CD8-positive, alpha-beta T cell (primary cell): ENCODE measurements at regions of chr12 and their contacts with region 1.

Region 1: GRCh38 chr12:116236148-116236731 is 41.3 kb downstream of the MED13L start:
- DNase-seq: peak in 8 of 9 experiments; percentile 26 to 78 (median 54)
- ATAC-seq: peak; percentile 73
- H3K4me3 ChIP-seq: no peak overlapping the region
- H3K4me3 Mint-ChIP-seq: peak overlapping the region; percentile 1
- H3K27ac ChIP-seq: peak overlapping the region in 1 of 2 experiments; percentile 18
- H3K27ac Mint-ChIP-seq: peak overlapping the region; percentile 83
- H3K4me1 ChIP-seq: peaks cover 10% of the 10 kb centered on the region
- H3K4me1 Mint-ChIP-seq: peaks cover 46% of the 10 kb centered on the region
- H3K27me3 ChIP-seq: no peaks in the 10 kb centered on the region
- H3K27me3 Mint-ChIP-seq: no peaks in the 10 kb centered on the region
- CTCF ChIP-seq: peak; percentile 52

Region 2: DNA sequence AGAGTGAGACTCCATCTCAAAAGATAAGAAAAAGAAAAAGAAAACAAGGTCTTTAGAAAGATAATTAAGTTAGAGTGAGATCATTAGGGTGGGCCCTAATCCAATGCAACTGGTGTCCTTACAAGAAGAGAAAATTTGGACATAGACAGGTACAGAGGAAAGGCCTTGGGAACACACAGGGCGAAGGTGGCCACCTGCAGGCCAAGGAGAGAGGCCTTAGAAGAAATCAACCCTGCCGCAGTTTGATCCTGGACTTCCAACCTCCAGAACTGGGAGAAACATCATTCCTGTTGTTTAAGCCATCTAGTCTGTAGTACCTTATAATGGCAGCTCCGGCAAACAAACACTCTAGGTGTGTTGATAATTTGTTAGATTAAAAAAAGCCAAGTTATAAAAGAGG is 450.7 kb before region 1 on chr12:
- CTCF ChIA-PET with region 1: no interaction called
- POLR2A ChIA-PET with region 1: no interaction called
- intact Hi-C with region 1: no loop called
- DNase-seq: no peak
- ATAC-seq: no peak
- H3K4me3 ChIP-seq: no peak overlapping the region
- H3K4me3 Mint-ChIP-seq: no peak overlapping the region
- H3K27ac ChIP-seq: no peak overlapping the region
- H3K27ac Mint-ChIP-seq: no peak overlapping the region
- H3K4me1 ChIP-seq: no peaks in the 10 kb centered on the region
- H3K4me1 Mint-ChIP-seq: no peaks in the 10 kb centered on the region
- H3K27me3 ChIP-seq: no peaks in the 10 kb centered on the region
- H3K27me3 Mint-ChIP-seq: peaks cover 2% of the 10 kb centered on the region
- CTCF ChIP-seq: no peak

Region 3: GRCh38 chr12:115998119-115998633 is 238.1 kb before region 1 on chr12:
- CTCF ChIA-PET with region 1: interaction called, 8 read pairs
- POLR2A ChIA-PET with region 1: no interaction called
- intact Hi-C with region 1: loop called (anchors 1 to 5 kb)
- DNase-seq: peak in 3 of 9 experiments; percentile 20 to 63 (median 55)
- ATAC-seq: peak; percentile 58
- H3K4me3 ChIP-seq: no peak overlapping the region
- H3K4me3 Mint-ChIP-seq: no peak overlapping the region
- H3K27ac ChIP-seq: no peak overlapping the region
- H3K27ac Mint-ChIP-seq: peak overlapping the region; percentile 75
- H3K4me1 ChIP-seq: no peaks in the 10 kb centered on the region
- H3K4me1 Mint-ChIP-seq: peaks cover 14% of the 10 kb centered on the region
- H3K27me3 ChIP-seq: no peaks in the 10 kb centered on the region
- H3K27me3 Mint-ChIP-seq: no peaks in the 10 kb centered on the region
- CTCF ChIP-seq: peak; percentile 97

Region 4: GRCh38 chr12:116015525-116015924 is 220.7 kb before region 1 on chr12:
- CTCF ChIA-PET with region 1: no interaction called
- POLR2A ChIA-PET with region 1: no interaction called
- intact Hi-C with region 1: loop called (anchors 5 kb)
- DNase-seq: peak in 2 of 9 experiments; percentile 7 to 30
- ATAC-seq: no peak
- H3K4me3 ChIP-seq: no peak overlapping the region
- H3K4me3 Mint-ChIP-seq: no peak overlapping the region
- H3K27ac ChIP-seq: no peak overlapping the region
- H3K27ac Mint-ChIP-seq: peak overlapping the region; percentile 2
- H3K4me1 ChIP-seq: no peaks in the 10 kb centered on the region
- H3K4me1 Mint-ChIP-seq: no peaks in the 10 kb centered on the region
- H3K27me3 ChIP-seq: no peaks in the 10 kb centered on the region
- H3K27me3 Mint-ChIP-seq: no peaks in the 10 kb centered on the region
- CTCF ChIP-seq: peak; percentile 35

Region 5: DNA sequence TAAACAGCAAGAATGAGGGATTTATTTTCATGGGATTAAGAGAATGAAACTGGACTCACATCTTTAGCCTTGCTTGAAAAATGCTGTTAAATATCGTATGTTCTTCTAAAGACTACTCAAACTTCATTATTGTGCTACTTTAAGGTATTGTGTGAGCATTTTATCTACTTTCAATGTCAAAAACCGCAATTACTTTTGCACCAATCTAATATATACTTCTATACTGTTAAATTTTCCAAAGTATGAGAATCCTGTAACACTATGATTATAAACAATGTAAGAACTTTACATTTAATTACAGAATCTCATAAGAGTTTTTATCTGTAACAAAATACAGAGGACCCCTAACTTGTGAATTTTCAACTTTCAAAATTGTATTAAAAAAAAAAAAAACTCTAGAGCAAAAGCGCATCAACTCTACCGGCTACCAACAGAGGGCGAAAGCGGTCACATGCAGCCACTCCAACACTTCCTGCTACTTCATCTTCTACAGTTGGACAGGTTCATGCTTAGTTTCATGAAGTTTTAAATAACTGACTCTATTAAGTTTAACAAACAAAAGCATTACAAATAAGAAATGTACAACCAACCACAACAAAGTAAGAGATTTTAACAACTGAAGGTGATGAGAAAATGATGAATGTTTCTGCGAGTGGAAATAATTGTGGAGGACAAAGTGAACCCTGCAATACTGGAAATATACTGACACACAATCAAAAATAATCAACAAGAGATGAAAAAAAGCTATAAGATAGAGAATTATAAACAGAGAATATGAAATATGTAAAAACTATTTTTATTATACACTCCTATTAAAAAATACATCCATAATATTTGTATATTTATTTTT is 169.6 kb before region 1 on chr12:
- CTCF ChIA-PET with region 1: interaction called, 9 read pairs
- POLR2A ChIA-PET with region 1: no interaction called
- intact Hi-C with region 1: loop called (anchors 1 to 5 kb)
- DNase-seq: peak; percentile 8 to 78 (median 59)
- ATAC-seq: peak; percentile 88
- H3K4me3 ChIP-seq: no peak overlapping the region
- H3K4me3 Mint-ChIP-seq: no peak overlapping the region
- H3K27ac ChIP-seq: no peak overlapping the region
- H3K27ac Mint-ChIP-seq: no peak overlapping the region
- H3K4me1 ChIP-seq: no peaks in the 10 kb centered on the region
- H3K4me1 Mint-ChIP-seq: peaks cover 26% of the 10 kb centered on the region
- H3K27me3 ChIP-seq: no peaks in the 10 kb centered on the region
- H3K27me3 Mint-ChIP-seq: no peaks in the 10 kb centered on the region
- CTCF ChIP-seq: peak; percentile 83

Region 6: DNA sequence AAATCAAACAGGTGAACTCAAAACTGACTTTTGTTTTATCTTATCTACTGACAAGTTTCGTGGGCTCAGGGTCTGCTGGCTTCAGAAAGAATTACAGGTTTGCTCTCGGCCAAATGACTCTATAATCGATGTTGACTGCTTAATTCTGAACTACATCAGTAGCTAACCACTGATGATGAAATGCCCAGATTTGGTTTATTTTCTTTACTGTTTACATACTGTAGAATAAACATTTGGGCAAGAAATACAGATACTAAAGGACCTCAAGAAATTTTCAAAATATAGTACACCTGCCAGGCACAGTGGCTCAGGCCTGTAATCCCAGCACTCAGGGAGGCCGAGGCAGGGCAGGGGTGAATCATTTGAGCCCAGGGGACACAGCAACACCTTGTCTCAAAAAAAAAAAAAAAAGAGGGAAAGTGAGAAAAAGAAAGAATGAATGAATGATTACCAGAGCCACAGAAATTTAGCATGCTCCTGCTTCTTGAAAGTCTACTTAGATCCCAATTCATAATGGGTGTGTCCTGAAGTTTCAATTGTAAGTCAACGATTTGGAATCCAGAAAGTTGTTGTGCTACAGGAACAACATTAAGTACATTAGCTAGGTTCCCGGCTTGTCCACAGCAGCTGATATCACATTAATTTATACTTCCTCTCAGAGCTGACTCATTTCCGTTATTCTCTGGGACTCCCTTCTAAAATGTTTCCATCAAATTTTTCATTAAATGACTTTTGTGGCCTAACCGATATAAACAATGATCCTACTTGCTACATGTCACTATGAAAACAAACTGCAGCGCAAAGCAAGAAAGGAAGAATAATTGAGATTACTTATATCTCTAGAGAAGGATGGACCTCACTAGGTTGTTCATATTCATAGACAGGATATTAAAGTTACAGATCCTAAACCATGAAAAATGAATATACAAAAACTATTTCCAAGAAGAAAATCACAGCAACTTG is 93.0 kb before region 1 on chr12:
- CTCF ChIA-PET with region 1: interaction called, 3 read pairs
- POLR2A ChIA-PET with region 1: no interaction called
- intact Hi-C with region 1: loop called (anchors 5 kb)
- DNase-seq: peak in 1 of 9 experiments; percentile 29
- ATAC-seq: peak; percentile 34
- H3K4me3 ChIP-seq: no peak overlapping the region
- H3K4me3 Mint-ChIP-seq: peak overlapping the region; percentile 22
- H3K27ac ChIP-seq: no peak overlapping the region
- H3K27ac Mint-ChIP-seq: peak overlapping the region; percentile 74
- H3K4me1 ChIP-seq: peaks cover 9% of the 10 kb centered on the region
- H3K4me1 Mint-ChIP-seq: peaks cover 56% of the 10 kb centered on the region
- H3K27me3 ChIP-seq: no peaks in the 10 kb centered on the region
- H3K27me3 Mint-ChIP-seq: no peaks in the 10 kb centered on the region
- CTCF ChIP-seq: no peak

Region 7: GRCh38 chr12:116599285-116600136 is 363.3 kb after region 1 on chr12:
- CTCF ChIA-PET with region 1: interaction called, 4 read pairs
- POLR2A ChIA-PET with region 1: no interaction called
- intact Hi-C with region 1: loop called in 1 of 2 experiments (anchors 2 kb)
- DNase-seq: peak; percentile 20 to 81 (median 62)
- ATAC-seq: peak; percentile 75
- H3K4me3 ChIP-seq: no peak overlapping the region
- H3K4me3 Mint-ChIP-seq: no peak overlapping the region
- H3K27ac ChIP-seq: no peak overlapping the region
- H3K27ac Mint-ChIP-seq: no peak overlapping the region
- H3K4me1 ChIP-seq: peaks cover 13% of the 10 kb centered on the region
- H3K4me1 Mint-ChIP-seq: peaks cover 20% of the 10 kb centered on the region
- H3K27me3 ChIP-seq: peaks cover 0 to 3% of the 10 kb centered on the region in 2 experiments
- H3K27me3 Mint-ChIP-seq: no peaks in the 10 kb centered on the region
- CTCF ChIP-seq: peak; percentile 47

Region 8: GRCh38 chr12:116708826-116709756 is 472.9 kb after region 1 on chr12:
- CTCF ChIA-PET with region 1: no interaction called
- POLR2A ChIA-PET with region 1: no interaction called
- intact Hi-C with region 1: loop called in 1 of 2 experiments (anchors 1 kb)
- DNase-seq: peak; percentile 17 to 71 (median 52)
- ATAC-seq: peak; percentile 90
- H3K4me3 ChIP-seq: no peak overlapping the region
- H3K4me3 Mint-ChIP-seq: peak overlapping the region; percentile 68
- H3K27ac ChIP-seq: no peak overlapping the region
- H3K27ac Mint-ChIP-seq: no peak overlapping the region
- H3K4me1 ChIP-seq: peaks cover 5% of the 10 kb centered on the region
- H3K4me1 Mint-ChIP-seq: peaks cover 9% of the 10 kb centered on the region
- H3K27me3 ChIP-seq: peaks cover 0 to 2% of the 10 kb centered on the region in 2 experiments
- H3K27me3 Mint-ChIP-seq: peaks cover 4% of the 10 kb centered on the region
- CTCF ChIP-seq: peak; percentile 61